Dendritic cell treated with granulocyte-macrophage colony-stimulating factor and Interleukin-4, amounts not matched to agents 40 ng/mL and 50 ng/mL, for 4 days (primary cell): ENCODE measurements at regions of chr16 and their contacts with region 1.

Region 1: DNA sequence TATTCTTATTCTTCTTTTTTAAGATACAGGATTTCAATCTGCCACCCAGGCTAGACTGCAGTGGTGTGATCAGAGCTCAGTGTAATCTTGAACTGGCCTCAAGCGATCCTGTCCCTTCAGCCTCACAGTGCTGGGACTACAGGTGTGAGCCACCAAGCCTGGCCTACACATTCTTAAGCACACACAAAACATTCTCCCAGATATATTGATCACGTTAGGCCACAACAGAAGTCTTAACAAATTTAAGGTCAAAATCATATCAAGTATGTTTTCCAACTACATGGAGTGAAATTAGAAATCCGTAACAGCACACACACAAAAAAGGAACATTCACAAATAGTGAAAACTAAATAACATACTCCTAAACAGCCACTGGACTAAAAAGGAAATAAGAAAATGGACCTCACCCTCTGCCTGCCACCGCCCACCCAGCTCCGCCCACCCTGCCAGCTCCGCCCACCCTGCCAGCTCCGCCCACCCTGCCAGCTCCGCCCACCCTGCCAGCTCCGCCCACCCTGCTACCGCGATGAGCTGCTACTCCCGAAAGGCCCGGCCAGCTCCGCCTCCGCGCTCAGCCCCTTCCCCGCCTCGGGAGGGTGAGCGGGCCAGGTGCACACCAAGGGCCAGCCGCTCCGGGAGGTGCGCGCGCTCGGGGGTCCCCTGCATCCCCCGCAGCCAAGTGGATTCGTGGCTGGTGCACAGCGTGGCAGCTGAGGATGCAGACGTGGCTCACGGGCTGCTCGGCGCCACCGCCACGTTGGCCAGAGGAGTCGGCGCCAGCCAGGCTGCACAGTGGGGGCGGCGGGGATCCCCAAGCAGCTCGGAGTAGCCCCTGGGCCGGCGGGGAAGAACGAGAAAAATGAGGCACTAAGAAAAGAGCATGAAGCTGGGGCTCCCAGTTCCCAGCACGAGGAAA is 41.2 kb downstream of the C16orf87 start:
- H3K4me3 Mint-ChIP-seq: peak overlapping the region; percentile 80
- H3K27ac Mint-ChIP-seq: peak overlapping the region; percentile 93
- H3K4me1 Mint-ChIP-seq: peaks cover 41% of the 10 kb centered on the region
- H3K27me3 Mint-ChIP-seq: no peaks in the 10 kb centered on the region

Region 2: GRCh38 chr16:46731691-46732555 is 57.8 kb before region 1 on chr16:
- intact Hi-C with region 1: no loop called
- H3K4me3 Mint-ChIP-seq: no peak overlapping the region
- H3K27ac Mint-ChIP-seq: peak overlapping the region; percentile 14
- H3K4me1 Mint-ChIP-seq: no peaks in the 10 kb centered on the region
- H3K27me3 Mint-ChIP-seq: no peaks in the 10 kb centered on the region

Region 3: DNA sequence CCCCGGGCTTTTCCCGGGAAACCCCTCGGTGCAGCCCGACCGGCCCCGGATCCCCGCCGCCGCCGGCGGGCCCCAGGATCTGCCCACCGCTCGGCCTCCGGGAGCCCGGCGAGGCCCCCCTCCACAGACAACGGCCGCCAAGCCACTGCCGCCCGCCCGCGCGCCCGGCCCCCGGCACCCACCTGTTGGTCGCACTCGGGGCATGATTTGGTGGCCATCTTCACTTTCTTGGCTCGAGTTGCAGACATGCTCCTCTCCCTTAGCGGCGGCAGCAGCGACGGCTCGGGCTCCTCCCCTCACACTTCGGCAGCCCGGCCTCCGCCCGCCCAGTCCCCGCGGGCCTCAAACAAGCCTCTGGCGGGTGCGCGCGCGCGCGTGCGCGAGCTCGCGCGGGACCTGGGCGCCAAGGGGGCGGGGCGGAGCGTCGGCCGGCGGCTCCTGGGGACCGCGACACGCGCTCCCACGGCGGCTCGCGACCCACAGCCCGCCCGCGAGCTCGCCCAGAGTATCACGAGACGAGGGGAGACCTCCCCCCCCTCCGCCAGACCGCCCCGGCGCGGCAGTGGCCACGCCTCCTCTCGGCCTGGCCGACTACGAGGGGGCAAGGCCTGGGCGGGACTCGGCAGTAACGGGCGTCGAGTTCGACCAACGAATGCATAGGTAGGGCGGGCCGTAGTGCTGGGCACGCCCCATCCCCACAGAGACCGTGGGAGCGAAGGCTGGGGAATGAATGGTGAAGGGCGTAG is 41.3 kb after region 1 on chr16 and contains the start of gene C16orf87:
- intact Hi-C with region 1: loop called (anchors 2 kb)
- H3K4me3 Mint-ChIP-seq: peak within 1 kb of the TSS; percentile 82
- H3K27ac Mint-ChIP-seq: peak within 1 kb of the TSS; percentile 88
- H3K4me1 Mint-ChIP-seq: peaks cover 19% of the 10 kb centered on the region
- H3K27me3 Mint-ChIP-seq: no peaks in the 10 kb centered on the region